GM12878 (cell line): ENCODE measurements at regions of chr1 and their contacts with region 1.

Region 1: GRCh38 chr1:178542560-178543356 is 29.8 kb downstream of the TEX35 start:
- DNase-seq: peak; percentile 52
- ATAC-seq: peak; percentile 94
- H3K4me3 ChIP-seq: peak overlapping the region; percentile 80
- H3K27ac ChIP-seq: peak overlapping the region; percentile 82
- H3K4me1 ChIP-seq: peaks cover 7% of the 10 kb centered on the region
- H3K27me3 ChIP-seq: no peaks in the 10 kb centered on the region
- CTCF ChIP-seq: peak; percentile 77 to 90 (median 81)
- EP300 ChIP-seq: no peak
- POLR2A ChIP-seq: no peak; the same call in 1 of the 2 replicates
- RAD21 ChIP-seq: peak; percentile 77

Region 2: DNA sequence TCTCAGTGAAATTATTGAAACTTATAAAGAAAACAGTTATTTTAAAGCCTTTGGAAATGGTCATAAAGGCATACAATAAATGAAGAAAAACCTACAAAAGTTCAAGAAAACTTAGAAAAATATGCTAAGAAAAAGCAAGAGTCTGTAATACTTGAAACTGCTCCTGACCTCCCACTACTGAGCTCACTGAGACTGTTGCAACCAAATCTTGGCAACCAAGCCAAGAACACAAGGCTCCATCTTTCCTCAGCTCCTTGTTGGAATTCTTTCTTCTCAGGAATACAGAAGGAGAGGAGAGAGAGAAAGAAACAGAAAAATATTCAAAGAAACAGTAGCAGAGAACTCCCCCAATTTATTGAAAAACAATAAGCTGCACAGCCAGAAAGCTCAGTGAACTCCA is 288.3 kb before region 1 on chr1:
- CTCF ChIA-PET with region 1: no interaction called
- POLR2A ChIA-PET with region 1: no interaction called
- RAD21 ChIA-PET with region 1: no interaction called
- SMC1A ChIA-PET with region 1: no interaction called
- in situ Hi-C with region 1: no loop called
- intact Hi-C with region 1: no loop called
- DNase-seq: no peak
- ATAC-seq: no peak
- H3K4me3 ChIP-seq: no peak overlapping the region
- H3K27ac ChIP-seq: no peak overlapping the region
- H3K4me1 ChIP-seq: no peaks in the 10 kb centered on the region
- H3K27me3 ChIP-seq: no peaks in the 10 kb centered on the region
- CTCF ChIP-seq: no peak
- EP300 ChIP-seq: no peak
- POLR2A ChIP-seq: no peak
- RAD21 ChIP-seq: no peak

Region 3: GRCh38 chr1:178560871-178561376 is 18.2 kb after region 1 on chr1:
- CTCF ChIA-PET with region 1: interaction called, 10 read pairs
- POLR2A ChIA-PET with region 1: interaction called, 3 read pairs
- RAD21 ChIA-PET with region 1: no interaction called
- SMC1A ChIA-PET with region 1: interaction called, 3 read pairs
- in situ Hi-C with region 1: no loop called
- intact Hi-C with region 1: no loop called
- DNase-seq: no peak
- ATAC-seq: no peak
- H3K4me3 ChIP-seq: no peak overlapping the region
- H3K27ac ChIP-seq: no peak overlapping the region
- H3K4me1 ChIP-seq: no peaks in the 10 kb centered on the region; the same call in 1 of the 2 replicates
- H3K27me3 ChIP-seq: no peaks in the 10 kb centered on the region
- CTCF ChIP-seq: no peak
- EP300 ChIP-seq: no peak
- POLR2A ChIP-seq: no peak
- RAD21 ChIP-seq: no peak

Region 4: GRCh38 chr1:178607718-178608408 is 65.1 kb after region 1 on chr1:
- CTCF ChIA-PET with region 1: interaction called, 9 read pairs
- POLR2A ChIA-PET with region 1: interaction called, 4 read pairs
- RAD21 ChIA-PET with region 1: interaction called, 7 read pairs
- SMC1A ChIA-PET with region 1: interaction called, 5 read pairs
- in situ Hi-C with region 1: no loop called
- intact Hi-C with region 1: loop called (anchors 2 kb)
- DNase-seq: peak; percentile 72
- ATAC-seq: peak; percentile 83
- H3K4me3 ChIP-seq: no peak overlapping the region; the same call in 1 of the 2 replicates
- H3K27ac ChIP-seq: peak overlapping the region; percentile 50
- H3K4me1 ChIP-seq: peaks cover 41% of the 10 kb centered on the region
- H3K27me3 ChIP-seq: no peaks in the 10 kb centered on the region
- CTCF ChIP-seq: no peak
- EP300 ChIP-seq: 0 out of 4 replicates have a peak, but pooled peaks of 1 of the 2 experiments have one; percentile 21
- POLR2A ChIP-seq: no peak
- RAD21 ChIP-seq: no peak

Region 5: DNA sequence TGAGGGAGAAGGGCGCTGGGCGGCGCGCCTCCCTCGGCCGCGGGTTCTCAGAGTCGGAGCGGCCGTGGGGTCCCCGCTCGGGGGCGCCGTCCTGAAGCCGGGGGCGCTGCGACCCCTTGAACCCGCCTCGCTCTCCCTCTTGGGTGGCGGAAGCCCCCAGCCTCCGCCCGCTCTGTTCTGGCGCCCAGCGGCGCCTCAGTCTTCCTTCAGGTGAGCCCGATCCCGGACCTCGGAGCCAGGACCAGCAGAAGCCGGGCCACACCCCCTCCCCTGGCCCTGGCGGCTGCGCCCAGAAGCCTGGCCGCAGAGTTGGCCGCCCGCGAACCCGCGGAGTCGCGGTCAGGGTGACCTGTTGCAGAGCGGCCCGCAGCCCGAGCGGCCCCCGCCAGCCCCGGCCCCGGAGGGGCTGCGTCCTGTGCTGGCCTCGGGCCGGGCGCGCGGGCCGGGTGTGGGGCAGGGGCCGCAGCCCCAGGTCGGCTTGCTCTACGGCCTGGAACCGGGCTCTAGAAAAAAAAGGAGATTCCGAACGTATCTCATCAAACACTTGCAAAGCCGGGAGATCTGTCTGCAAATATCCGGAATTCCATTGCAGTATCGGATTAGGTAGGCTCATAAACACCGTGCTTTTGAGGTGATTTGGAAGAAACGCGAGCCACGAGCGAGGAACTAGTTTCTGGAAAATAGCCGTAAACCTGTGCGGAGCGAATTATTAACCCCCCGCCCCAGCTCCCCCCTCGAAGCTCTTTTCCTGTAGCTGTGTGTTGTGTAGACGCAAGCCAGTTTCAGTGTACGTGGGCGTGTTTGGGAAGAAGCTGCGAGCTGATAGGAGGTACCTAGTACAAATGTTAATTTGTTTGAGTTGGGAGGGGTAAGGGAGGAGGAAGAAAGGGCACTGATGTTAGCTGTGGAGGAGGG is 183.1 kb after region 1 on chr1:
- CTCF ChIA-PET with region 1: interaction called, 16 read pairs
- POLR2A ChIA-PET with region 1: interaction called, 3 read pairs
- RAD21 ChIA-PET with region 1: interaction called, 25 read pairs
- SMC1A ChIA-PET with region 1: interaction called, 9 read pairs
- in situ Hi-C with region 1: no loop called
- intact Hi-C with region 1: no loop called
- DNase-seq: peak; percentile 32
- ATAC-seq: peak; percentile 75
- H3K4me3 ChIP-seq: peak overlapping the region; percentile 69
- H3K27ac ChIP-seq: no peak overlapping the region; the same call in 1 of the 2 replicates
- H3K4me1 ChIP-seq: no peaks in the 10 kb centered on the region
- H3K27me3 ChIP-seq: peaks cover 0 to 4% of the 10 kb centered on the region in 2 experiments; a peak in 2 of 4 replicates
- CTCF ChIP-seq: no peak
- EP300 ChIP-seq: no peak
- POLR2A ChIP-seq: no peak
- RAD21 ChIP-seq: no peak

Region 6: GRCh38 chr1:178768423-178768822 is 225.7 kb after region 1 on chr1:
- CTCF ChIA-PET with region 1: interaction called, 22 read pairs
- POLR2A ChIA-PET with region 1: no interaction called
- RAD21 ChIA-PET with region 1: interaction called, 3 read pairs
- SMC1A ChIA-PET with region 1: interaction called, 3 read pairs
- in situ Hi-C with region 1: loop called (anchors 25 kb)
- intact Hi-C with region 1: no loop called
- DNase-seq: no peak
- ATAC-seq: peak; percentile 75
- H3K4me3 ChIP-seq: no peak overlapping the region
- H3K27ac ChIP-seq: no peak overlapping the region
- H3K4me1 ChIP-seq: no peaks in the 10 kb centered on the region
- H3K27me3 ChIP-seq: no peaks in the 10 kb centered on the region
- CTCF ChIP-seq: peak; percentile 75 to 81 (median 77)
- EP300 ChIP-seq: no peak
- POLR2A ChIP-seq: no peak
- RAD21 ChIP-seq: peak; percentile 64

Region 7: GRCh38 chr1:178997428-178997827 is 454.7 kb after region 1 on chr1:
- CTCF ChIA-PET with region 1: interaction called, 83 read pairs
- POLR2A ChIA-PET with region 1: no interaction called
- RAD21 ChIA-PET with region 1: interaction called, 33 read pairs
- SMC1A ChIA-PET with region 1: interaction called, 25 read pairs
- in situ Hi-C with region 1: no loop called
- intact Hi-C with region 1: loop called (anchors 1 kb)
- DNase-seq: no peak
- ATAC-seq: no peak
- H3K4me3 ChIP-seq: no peak overlapping the region
- H3K27ac ChIP-seq: no peak overlapping the region
- H3K4me1 ChIP-seq: no peaks in the 10 kb centered on the region
- H3K27me3 ChIP-seq: no peaks in the 10 kb centered on the region
- CTCF ChIP-seq: no peak
- EP300 ChIP-seq: no peak
- POLR2A ChIP-seq: no peak
- RAD21 ChIP-seq: no peak

Region 8: DNA sequence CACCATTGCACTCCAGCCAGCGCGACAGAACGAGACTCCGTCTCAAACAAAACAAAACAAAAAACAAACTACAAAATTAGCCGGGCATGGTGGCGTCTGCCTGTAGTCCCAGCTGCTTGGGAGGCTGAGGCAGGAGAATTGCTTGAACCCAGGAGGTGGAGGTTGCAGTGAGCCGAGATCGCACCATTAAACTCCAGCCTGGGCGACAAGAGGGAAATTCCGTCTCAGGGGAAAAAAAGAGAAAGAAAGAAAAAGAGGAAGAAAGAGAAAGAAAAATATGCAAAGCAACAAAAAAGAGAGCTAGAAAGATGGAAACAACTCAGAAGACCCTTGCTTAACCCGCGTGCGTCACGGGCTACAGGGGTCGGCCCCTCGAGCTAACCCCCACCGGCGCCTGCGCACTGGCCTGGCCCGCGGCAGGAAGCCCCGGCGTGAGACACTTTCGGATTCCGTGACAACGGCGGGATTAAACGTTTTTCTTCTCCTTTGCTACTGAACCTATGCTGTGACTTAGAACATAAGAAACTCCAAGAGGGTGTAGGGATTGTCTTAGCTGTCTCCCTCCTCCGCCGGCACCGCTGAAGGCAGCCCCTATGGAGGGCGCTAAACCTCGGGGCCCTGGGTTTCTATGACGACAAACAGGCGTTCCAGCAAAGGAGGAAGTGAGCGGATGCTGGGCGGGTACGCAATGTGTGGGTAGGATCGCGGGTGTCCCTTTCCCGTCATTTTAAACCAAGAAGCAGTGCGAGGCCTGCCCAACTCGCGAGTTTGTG is 822.7 kb after region 1 on chr1 and contains the start of gene AXDND1:
- CTCF ChIA-PET with region 1: interaction called, 4 read pairs
- POLR2A ChIA-PET with region 1: no interaction called
- RAD21 ChIA-PET with region 1: no interaction called
- SMC1A ChIA-PET with region 1: no interaction called
- in situ Hi-C with region 1: no loop called
- intact Hi-C with region 1: loop called (anchors 5 kb)
- DNase-seq: peak; percentile 70
- ATAC-seq: peak; percentile 96
- H3K4me3 ChIP-seq: peak within 1 kb of the TSS; percentile 79
- H3K27ac ChIP-seq: peak within 1 kb of the TSS; percentile 97
- H3K4me1 ChIP-seq: no peaks in the 10 kb centered on the region; the same call in 1 of the 2 replicates
- H3K27me3 ChIP-seq: 0 out of 4 replicates have a peak, but pooled peaks cover 0 to 2% of the 10 kb centered on the region in 2 experiments
- CTCF ChIP-seq: peak in 1 of 3 experiments; percentile 6; a peak in 1 of 6 replicates
- EP300 ChIP-seq: no peak
- POLR2A ChIP-seq: peak; percentile 67
- RAD21 ChIP-seq: no peak
- polyA plus RNA-seq, gene AXDND1: 0.16 to 0.27 TPM